HepG2 (cell line): ENCODE measurements at regions of chr18 and their contacts with region 1.

Region 1: GRCh38 chr18:35343936-35344735 is at the start of gene ZNF24:
- DNase-seq: peak; percentile 91
- ATAC-seq: peak; percentile 93
- H3K4me3 ChIP-seq: peak within 1 kb of the TSS; percentile 91 to 93 (median 92)
- H3K27ac ChIP-seq: peak within 1 kb of the TSS; percentile 98
- H3K4me1 ChIP-seq: peaks cover 56% of the 10 kb centered on the region
- H3K27me3 ChIP-seq: no peaks in the 10 kb centered on the region
- CTCF ChIP-seq: no peak
- EP300 ChIP-seq: peak; percentile 23 to 33; a peak in 1 of 4 replicates
- POLR2A ChIP-seq: peak; percentile 78 to 94
- RAD21 ChIP-seq: no peak
- total RNA-seq, gene ZNF24: 41.1 and 79.4 TPM in 2 replicates

Region 2: DNA sequence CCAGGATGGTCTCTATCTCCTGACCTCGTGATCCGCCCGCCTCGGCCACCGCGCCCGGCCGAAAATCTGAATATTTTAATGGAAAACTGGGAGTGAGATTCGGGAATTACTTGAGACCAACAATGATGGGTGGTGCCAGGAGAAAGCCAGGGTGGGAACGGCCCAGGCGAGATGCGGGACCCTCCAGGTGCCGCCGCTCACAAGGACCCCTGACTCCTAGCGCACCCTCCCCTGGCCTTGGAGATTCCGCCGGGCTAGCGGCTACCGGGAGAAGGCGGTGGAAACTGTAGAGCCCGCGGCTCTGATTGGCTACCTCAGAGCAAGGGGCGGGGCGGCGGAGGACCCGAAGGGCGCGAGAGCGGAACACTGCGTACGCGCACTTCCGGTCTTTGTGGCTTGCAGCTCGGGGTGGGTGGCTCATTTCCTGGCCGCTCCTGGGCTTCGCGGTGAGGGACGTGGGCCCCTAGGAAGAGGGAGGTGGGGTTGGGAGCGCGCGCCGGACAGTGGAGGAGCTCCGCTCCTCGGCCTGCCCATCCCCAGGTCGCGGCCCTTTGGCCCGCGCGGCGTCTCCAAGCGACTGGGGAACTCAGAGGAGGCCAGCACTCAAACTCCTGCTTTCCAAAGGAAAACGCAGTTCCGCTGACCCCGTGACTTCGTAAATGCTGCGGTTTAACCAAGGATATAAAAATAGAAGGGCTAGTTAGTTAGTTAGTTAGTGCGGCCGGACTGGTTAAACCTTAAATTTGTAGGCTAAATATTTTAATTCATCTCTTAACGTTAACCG is 103.3 kb before region 1 on chr18 and contains the start of gene ZNF397:
- CTCF ChIA-PET with region 1: no interaction called
- POLR2A ChIA-PET with region 1: interaction called, 44 read pairs
- in situ Hi-C with region 1: no loop called
- intact Hi-C with region 1: loop called (anchors 1 kb)
- DNase-seq: peak; percentile 94
- ATAC-seq: peak; percentile 99
- H3K4me3 ChIP-seq: peak within 1 kb of the TSS; percentile 74 to 89 (median 79)
- H3K27ac ChIP-seq: peak within 1 kb of the TSS; percentile 88
- H3K4me1 ChIP-seq: peaks cover 10% of the 10 kb centered on the region
- H3K27me3 ChIP-seq: no peaks in the 10 kb centered on the region; a peak in 1 of 5 replicates
- CTCF ChIP-seq: 0 out of 2 replicates have a peak, but pooled peaks have one; percentile 6
- EP300 ChIP-seq: 0 out of 4 replicates have a peak, but pooled peaks of 1 of the 2 experiments have one; percentile 5
- POLR2A ChIP-seq: peak; percentile 82 to 85
- RAD21 ChIP-seq: peak; percentile 33
- total RNA-seq, gene ZNF397: 9.4 and 10.0 TPM in 2 replicates

Region 3: DNA sequence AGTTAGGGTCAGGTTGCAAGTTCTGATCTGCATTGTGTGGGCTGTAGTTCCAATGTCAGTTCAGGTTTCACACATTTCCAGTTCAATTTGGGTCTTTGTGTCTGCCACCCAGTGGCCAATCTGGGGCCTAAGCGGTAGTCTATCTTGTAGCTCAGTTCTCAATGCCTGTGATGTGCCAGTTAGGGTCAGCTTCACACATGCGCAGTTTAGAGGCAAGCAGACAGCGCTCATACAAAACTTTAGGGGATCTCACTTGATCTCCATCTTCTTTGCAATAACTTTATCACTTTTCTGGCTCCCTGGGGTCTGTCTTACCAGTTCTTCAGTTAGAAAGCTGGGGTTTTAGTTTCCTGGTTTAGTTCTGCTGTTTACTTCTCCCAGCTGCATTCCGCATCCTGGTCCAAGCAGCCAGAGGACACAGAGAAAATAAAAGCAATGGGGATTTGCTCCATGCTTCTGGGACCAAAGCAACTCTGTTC is 11.0 kb after region 1 on chr18:
- CTCF ChIA-PET with region 1: interaction called, 3 read pairs
- POLR2A ChIA-PET with region 1: interaction called, 17 read pairs
- in situ Hi-C with region 1: no loop called
- intact Hi-C with region 1: loop called (anchors 1 kb)
- DNase-seq: peak; percentile 85
- ATAC-seq: peak; percentile 100
- H3K4me3 ChIP-seq: peak overlapping the region in 2 of 3 experiments; percentile 25 to 38; a peak in 2 of 6 replicates
- H3K27ac ChIP-seq: no peak overlapping the region
- H3K4me1 ChIP-seq: no peaks in the 10 kb centered on the region
- H3K27me3 ChIP-seq: no peaks in the 10 kb centered on the region
- CTCF ChIP-seq: peak; percentile 92
- EP300 ChIP-seq: no peak
- POLR2A ChIP-seq: no peak
- RAD21 ChIP-seq: peak; percentile 74